ENCODE measurements at regions of chr2 and their contacts with region 1.

Region 1: DNA sequence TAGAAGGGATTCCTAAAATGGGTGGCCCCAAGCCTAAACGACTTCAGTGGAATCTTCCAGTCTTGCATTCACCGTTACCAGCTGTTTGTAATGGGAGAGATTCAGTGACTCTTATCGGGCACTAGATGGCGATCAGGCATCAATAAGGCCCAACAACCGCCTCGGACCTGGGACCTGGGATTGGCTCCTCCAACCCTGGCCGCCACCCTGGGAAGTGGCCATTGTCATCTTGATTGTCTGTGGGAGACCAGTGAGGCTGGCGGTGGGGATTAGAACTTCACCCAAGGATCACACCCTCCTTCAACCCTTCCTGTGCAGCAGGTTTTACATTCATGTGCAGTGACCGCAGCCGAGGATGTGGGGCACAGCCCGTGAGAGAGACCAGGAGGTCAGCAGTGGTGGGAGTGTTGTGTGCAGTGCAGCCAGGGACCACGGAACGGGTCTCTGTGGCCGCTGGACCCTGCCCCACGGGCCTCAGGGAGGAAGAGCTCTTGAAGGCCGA is 85.3 kb downstream of the SPP2 start:
- DNase-seq: peak; percentile 91 to 93
- H3K4me3 ChIP-seq: no peak overlapping the region
- H3K27ac ChIP-seq: peak overlapping the region; percentile 66
- H3K4me1 ChIP-seq: peaks cover 30% of the 10 kb centered on the region
- H3K27me3 ChIP-seq: no peaks in the 10 kb centered on the region
- CTCF ChIP-seq: peak; percentile 90

Region 2: DNA sequence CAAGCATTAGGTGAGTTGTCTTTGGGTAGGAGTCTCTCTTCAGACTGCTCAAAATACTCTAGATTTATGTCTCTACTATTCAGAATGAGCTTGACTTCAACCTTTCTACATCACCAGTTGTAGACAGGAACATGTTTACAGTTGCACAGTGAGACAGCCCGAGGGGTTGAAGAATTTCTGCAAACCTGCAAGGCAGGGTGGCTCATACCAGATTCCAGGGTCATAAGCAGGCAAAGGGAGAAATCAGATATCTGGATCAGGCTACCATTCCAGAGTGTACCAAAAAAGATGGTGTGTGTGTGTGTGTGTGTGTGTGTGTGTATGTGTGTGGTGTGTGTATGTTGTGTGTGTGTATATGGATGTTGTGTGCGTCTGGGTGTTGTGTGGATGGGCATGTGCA is 27.1 kb after region 1 on chr2:
- CTCF ChIA-PET with region 1: interaction called, 3 read pairs
- POLR2A ChIA-PET with region 1: no interaction called
- intact Hi-C with region 1: loop called (anchors 2 kb)
- DNase-seq: peak; percentile 65 to 88
- H3K4me3 ChIP-seq: no peak overlapping the region
- H3K27ac ChIP-seq: peak overlapping the region; percentile 30
- H3K4me1 ChIP-seq: peaks cover 64% of the 10 kb centered on the region
- H3K27me3 ChIP-seq: no peaks in the 10 kb centered on the region
- CTCF ChIP-seq: no peak

Region 3: GRCh38 chr2:234241656-234242458 is 106.1 kb after region 1 on chr2:
- CTCF ChIA-PET with region 1: interaction called, 4 read pairs
- POLR2A ChIA-PET with region 1: no interaction called
- intact Hi-C with region 1: loop called (anchors 2 kb)
- DNase-seq: peak; percentile 68 to 95
- H3K4me3 ChIP-seq: peak overlapping the region; percentile 36; the same call in 1 of the 2 replicates
- H3K27ac ChIP-seq: peak overlapping the region; percentile 91
- H3K4me1 ChIP-seq: peaks cover 68% of the 10 kb centered on the region
- H3K27me3 ChIP-seq: no peaks in the 10 kb centered on the region
- CTCF ChIP-seq: no peak

Region 4: DNA sequence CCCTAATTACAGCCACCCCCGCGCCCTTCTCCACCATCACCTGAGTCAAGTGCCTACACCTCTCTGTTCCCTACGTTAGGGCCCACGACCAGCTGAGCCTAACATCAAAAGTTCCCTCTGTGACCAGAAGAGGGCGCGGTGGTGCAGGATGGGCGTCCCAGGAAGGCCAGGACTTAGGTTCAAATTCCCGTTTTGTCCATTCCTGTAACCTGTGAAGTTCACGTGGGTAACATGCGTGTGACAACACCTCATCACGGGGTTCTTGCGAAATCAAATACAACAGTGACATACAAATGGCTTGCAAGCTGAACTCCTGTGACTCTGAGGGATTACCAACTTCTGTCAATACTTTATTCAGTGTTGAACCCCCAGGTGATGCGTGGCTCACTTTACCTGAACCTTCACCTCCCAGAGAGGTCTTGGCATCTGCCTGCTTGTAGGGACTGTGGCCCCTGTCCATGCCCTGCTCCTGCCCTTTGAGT is 153.2 kb after region 1 on chr2:
- CTCF ChIA-PET with region 1: interaction called, 3 read pairs
- POLR2A ChIA-PET with region 1: no interaction called
- intact Hi-C with region 1: loop called (anchors 1 kb)
- DNase-seq: peak in 1 of 2 experiments; percentile 58
- H3K4me3 ChIP-seq: no peak overlapping the region
- H3K27ac ChIP-seq: no peak overlapping the region
- H3K4me1 ChIP-seq: peaks cover 23% of the 10 kb centered on the region
- H3K27me3 ChIP-seq: no peaks in the 10 kb centered on the region
- CTCF ChIP-seq: peak; percentile 87

Region 5: DNA sequence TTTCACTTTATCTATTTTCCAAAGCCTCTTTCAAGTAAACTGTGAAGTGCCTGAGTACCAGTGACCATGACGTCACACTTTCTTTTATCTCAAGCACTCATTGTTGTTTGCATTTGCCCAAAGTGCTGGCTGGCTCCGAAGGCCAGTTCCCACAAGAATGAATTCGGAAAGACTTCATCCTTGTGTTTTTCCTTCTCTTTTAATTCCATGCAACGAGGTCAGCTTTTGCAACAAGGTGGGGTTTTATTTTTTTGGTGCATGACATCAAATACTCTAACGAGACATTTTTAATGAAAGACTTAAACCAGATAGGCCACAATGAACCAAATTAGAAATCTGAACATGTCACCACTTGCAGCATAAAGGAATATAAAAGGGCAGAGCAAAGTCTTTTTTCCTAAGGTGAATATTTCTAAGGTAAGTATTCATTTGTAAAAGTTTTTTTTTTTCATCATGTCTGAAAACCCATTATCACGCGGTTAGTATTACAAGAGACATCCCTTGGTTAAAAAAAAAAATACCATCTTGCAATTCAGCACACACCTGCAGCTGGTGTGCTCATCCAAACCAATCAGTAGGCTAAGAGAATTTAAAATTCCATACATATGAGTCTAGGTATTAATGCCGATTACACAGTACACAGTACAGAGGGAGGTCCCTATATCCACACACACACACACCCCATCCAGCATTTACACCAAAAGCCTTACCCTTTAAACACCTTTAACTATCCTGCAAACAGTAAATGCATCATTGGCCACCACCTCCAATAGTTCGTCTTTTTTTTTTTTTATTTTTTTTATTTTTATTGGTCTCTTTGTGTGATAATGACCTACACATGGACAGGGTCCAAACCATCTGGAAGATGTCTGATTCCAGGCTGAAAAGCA is 358.8 kb after region 1 on chr2:
- CTCF ChIA-PET with region 1: no interaction called
- POLR2A ChIA-PET with region 1: interaction called, 15 read pairs
- intact Hi-C with region 1: loop called (anchors 1 kb)
- DNase-seq: peak; percentile 16 to 83
- H3K4me3 ChIP-seq: peak overlapping the region; percentile 91
- H3K27ac ChIP-seq: peak overlapping the region; percentile 48
- H3K4me1 ChIP-seq: peaks cover 26% of the 10 kb centered on the region
- H3K27me3 ChIP-seq: no peaks in the 10 kb centered on the region
- CTCF ChIP-seq: peak; percentile 21; the same call in 1 of the 2 replicates

Region 6: DNA sequence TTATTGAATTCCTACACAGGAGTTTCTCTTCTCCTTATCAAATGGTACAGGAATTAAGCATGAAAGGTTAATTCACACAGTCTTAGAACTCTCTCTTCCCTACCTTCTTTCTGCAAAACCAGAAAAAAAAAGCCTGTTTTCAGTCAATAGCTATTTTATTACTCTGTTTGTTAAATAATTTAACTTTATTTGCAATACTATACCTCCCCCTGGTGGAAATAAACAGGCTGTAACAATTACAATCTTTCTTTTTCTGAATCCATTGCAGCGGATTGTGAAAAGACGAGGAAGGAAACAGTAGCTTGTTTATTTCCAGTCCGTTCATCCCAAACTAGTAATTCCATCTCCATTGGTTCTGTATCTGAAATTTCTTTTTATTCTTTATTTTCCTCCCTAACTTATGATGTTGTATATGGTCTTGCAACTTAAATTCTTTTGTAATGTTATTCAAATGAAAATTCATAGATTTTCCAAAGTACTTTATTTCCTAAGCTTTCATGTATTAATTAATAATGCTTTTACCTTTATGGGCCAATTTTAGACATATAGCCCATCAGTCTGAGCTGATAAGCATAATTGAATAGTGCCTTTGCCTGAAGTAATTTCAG is 981.2 kb after region 1 on chr2:
- CTCF ChIA-PET with region 1: interaction called, 3 read pairs
- POLR2A ChIA-PET with region 1: no interaction called
- intact Hi-C with region 1: loop called (anchors 1 kb)
- DNase-seq: peak in 1 of 2 experiments; percentile 55
- H3K4me3 ChIP-seq: no peak overlapping the region
- H3K27ac ChIP-seq: no peak overlapping the region
- H3K4me1 ChIP-seq: no peaks in the 10 kb centered on the region; the same call in 1 of the 2 replicates
- H3K27me3 ChIP-seq: no peaks in the 10 kb centered on the region
- CTCF ChIP-seq: peak; percentile 92

Measured in PC-9 (cell line).